ENCODE measurements at regions of chr19 and their contacts with region 1.

Region 1: GRCh38 chr19:47391510-47392223 is 27.7 kb downstream of the MEIS3 start:
- DNase-seq: peak; percentile 56 to 80 (median 74)
- ATAC-seq: peak; percentile 68
- H3K4me3 ChIP-seq: no peak overlapping the region
- H3K4me3 Mint-ChIP-seq: peak overlapping the region in 1 of 10 donors; percentile 17
- H3K27ac ChIP-seq: no peak overlapping the region
- H3K27ac Mint-ChIP-seq: peak overlapping the region in 1 of 9 donors; percentile 67
- H3K4me1 ChIP-seq: no peaks in the 10 kb centered on the region
- H3K4me1 Mint-ChIP-seq: peaks cover 0 to 5% (median 0%) of the 10 kb centered on the region in 7 donors
- H3K27me3 ChIP-seq: no peaks in the 10 kb centered on the region
- H3K27me3 Mint-ChIP-seq: peaks cover 7 to 21% (median 16%) of the 10 kb centered on the region in 5 donors

Region 2: DNA sequence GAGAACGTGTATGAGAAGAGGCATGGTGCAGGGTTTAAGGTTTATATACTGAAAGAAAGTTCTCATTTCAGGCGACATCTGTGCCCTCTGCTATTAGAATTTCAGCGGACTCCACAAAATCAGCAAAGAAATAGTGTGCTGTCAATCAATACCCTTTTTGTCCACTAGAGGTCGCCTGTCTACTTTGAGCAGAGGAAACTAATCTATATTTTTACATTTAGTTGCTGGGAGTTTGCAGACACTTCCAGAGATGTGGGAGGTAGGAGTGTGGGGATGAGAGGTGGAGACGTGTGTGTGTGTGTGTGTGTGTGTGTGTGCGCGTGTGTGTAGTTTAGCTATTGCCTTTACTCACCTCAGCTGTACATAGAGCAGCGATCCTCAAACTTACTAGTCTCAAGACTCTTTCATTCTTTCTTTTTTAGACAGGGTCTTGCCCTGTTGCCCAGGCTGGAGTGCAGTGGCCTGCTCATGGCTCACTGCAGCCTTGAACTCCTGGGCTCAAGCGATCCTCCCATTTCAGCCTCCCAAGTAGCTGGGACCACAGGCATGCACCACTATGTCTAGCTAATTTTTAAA is 107.3 kb before region 1 on chr19:
- CTCF ChIA-PET with region 1: interaction called, 6 read pairs
- POLR2A ChIA-PET with region 1: interaction called, 3 read pairs
- intact Hi-C with region 1: loop called (anchors 1 kb)
- DNase-seq: peak in 7 of 9 donors; percentile 32 to 78 (median 61)
- ATAC-seq: peak; percentile 72
- H3K4me3 ChIP-seq: no peak overlapping the region
- H3K4me3 Mint-ChIP-seq: no peak overlapping the region
- H3K27ac ChIP-seq: no peak overlapping the region
- H3K27ac Mint-ChIP-seq: no peak overlapping the region
- H3K4me1 ChIP-seq: no peaks in the 10 kb centered on the region
- H3K4me1 Mint-ChIP-seq: peaks cover 0 to 16% (median 6%) of the 10 kb centered on the region in 7 donors
- H3K27me3 ChIP-seq: no peaks in the 10 kb centered on the region
- H3K27me3 Mint-ChIP-seq: no peaks in the 10 kb centered on the region

Region 3: DNA sequence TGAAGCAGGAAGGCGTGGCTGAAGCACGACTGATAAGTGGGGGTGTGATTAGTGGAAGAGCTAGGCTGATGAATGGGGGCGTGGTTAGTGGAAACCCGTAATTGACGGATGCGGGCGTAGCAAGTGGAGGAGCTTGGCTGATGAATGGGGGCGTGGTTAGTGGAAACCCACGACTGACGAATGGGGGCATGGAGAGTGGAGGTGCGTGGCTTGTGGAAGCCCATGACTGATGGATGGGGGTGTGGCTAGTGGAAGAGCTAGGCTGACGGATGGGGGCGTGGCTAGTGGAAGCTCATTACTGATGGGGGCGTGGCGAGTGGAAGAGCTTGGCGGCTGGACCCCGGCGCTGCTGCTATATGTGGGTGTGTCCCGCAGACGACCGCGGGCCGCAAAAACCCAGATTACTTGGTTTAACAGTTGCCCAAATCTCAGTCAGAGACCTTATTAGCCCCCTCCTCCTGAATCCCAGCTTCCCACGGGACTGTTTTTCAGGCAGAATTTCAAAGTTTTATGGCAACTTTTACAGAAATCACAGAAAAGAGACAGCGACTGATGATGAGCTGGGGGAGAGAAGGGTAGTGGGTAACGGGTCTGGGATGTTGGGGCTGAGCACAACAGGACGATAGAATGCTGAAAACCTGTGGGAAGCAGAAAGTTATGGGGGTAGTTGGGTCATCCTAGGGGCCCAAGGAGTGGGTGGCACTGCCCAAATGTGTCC is 36.7 kb after region 1 on chr19:
- CTCF ChIA-PET with region 1: interaction called, 6 read pairs
- POLR2A ChIA-PET with region 1: no interaction called
- intact Hi-C with region 1: loop called in 1 of 2 experiments (anchors 2 kb)
- DNase-seq: peak; percentile 50 to 91 (median 71)
- ATAC-seq: peak; percentile 91
- H3K4me3 ChIP-seq: peak overlapping the region; percentile 50
- H3K4me3 Mint-ChIP-seq: no peak overlapping the region
- H3K27ac ChIP-seq: no peak overlapping the region
- H3K27ac Mint-ChIP-seq: no peak overlapping the region
- H3K4me1 ChIP-seq: peaks cover 10 to 34% of the 10 kb centered on the region in 2 donors
- H3K4me1 Mint-ChIP-seq: peaks cover under 1 to 23% (median 10%) of the 10 kb centered on the region in 7 donors
- H3K27me3 ChIP-seq: peaks cover 10 to 12% of the 10 kb centered on the region in 2 donors
- H3K27me3 Mint-ChIP-seq: peaks cover 39 to 47% (median 44%) of the 10 kb centered on the region in 5 donors

Measured in naive thymus-derived CD4-positive, alpha-beta T cell (primary cell).